Panc1 (cell line): ENCODE measurements at regions of chr7 and their contacts with region 1.

Region 1: DNA sequence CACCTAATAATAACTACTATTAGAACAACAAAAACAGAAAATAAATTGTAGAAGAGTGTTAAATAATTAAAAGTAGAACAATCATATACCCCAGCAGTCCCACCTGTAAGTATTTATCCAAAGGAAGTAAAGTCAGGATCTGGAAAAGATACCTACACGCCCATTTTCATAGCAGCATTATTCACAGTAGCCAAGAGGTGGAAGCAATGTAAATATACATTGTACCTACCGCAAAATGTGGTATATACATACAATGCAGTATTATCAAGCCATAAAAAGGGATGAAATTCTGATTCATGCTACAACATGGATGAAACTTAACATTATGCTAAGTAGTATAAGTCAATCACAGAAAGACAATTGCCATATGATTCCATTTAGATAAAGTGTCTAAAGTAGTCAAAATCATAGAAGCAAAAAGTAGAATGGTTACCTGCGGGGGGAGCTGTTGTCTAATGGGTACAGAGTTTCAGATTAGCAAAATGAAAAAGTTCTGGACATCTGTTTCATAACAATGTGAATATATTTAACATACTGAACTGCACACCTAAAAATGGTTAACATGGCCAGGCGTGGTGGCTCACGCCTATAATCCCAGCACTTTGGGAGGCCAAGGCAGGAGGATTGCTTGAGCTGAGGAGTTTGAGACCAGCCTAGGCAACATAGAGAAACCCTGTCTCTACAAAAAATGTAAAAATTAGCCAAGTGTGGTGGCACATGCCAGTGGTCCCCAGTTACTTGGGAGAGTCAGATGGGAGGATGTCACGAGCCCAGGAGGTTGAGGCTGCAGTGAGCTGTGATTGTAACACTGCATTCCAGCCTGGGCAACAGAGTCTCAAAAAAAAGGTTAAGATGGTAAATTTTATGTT is 6.0 kb upstream of the TMED4 start:
- DNase-seq: peak; percentile 75
- ATAC-seq: peak; percentile 88
- H3K4me3 ChIP-seq: no peak overlapping the region
- H3K27ac ChIP-seq: no peak overlapping the region
- H3K4me1 ChIP-seq: peaks cover 5% of the 10 kb centered on the region; the same call in 1 of the 2 replicates
- H3K27me3 ChIP-seq: no peaks in the 10 kb centered on the region
- CTCF ChIP-seq: peak; percentile 84

Region 2: DNA sequence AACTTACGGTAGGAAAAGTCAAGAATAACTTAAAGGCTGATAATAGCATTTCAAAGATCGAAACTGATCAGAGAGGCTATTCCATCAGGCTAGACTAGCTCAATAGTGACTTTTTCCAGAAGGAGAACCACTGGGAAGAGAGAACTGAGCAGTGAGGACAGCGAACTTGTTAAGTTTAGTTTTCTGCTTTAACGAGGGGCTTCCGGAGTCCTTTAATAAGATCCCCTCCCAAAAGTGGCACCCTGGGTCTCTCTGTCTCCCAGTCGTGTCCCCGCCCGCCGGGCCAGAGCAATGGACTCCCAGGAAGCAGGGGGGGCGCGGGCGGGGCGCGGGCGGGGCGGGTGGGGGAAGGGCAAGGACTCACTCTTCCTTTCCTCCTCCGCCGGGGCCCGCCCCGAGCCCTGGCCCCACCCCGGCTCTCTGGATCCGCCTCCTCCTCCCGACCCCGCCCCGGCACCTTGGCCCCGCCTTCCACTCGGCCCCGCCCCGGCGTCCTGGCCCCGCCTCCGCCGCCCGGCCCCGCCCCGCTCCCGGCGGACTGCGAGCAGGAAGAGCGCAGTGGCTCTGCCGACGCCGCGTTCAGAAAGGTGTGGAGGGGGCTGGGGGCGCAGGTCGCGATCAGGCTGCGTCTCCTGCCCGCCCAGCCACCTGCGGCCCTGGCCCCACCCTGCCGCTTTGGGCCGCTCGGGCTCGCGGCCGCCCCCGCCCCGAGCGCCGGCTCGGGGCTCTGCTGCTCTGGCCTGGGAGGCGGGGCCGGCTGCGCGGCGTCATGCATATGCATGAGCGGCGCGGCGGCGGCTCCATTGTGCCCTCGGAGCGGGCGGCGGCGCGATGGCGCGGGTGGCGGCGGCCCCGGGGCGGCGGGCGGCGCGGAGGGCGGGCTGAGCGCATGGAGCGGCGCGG is 160.2 kb after region 1 on chr7 and contains the start of gene ZMIZ2:
- CTCF ChIA-PET with region 1: no interaction called
- POLR2A ChIA-PET with region 1: no interaction called
- in situ Hi-C with region 1: no loop called
- intact Hi-C with region 1: loop called (anchors 5 kb)
- DNase-seq: no peak
- ATAC-seq: peak; percentile 92
- H3K4me3 ChIP-seq: peak within 1 kb of the TSS; percentile 64 to 80
- H3K27ac ChIP-seq: peak within 1 kb of the TSS; percentile 99
- H3K4me1 ChIP-seq: peaks cover 36% of the 10 kb centered on the region
- H3K27me3 ChIP-seq: no peaks in the 10 kb centered on the region
- CTCF ChIP-seq: no peak
- total RNA-seq, gene ZMIZ2: 137 TPM

Region 3: GRCh38 chr7:44797329-44798251 is 209.5 kb after region 1 on chr7:
- CTCF ChIA-PET with region 1: no interaction called
- POLR2A ChIA-PET with region 1: interaction called, 7 read pairs
- in situ Hi-C with region 1: no loop called
- intact Hi-C with region 1: loop called (anchors 5 kb)
- DNase-seq: peak; percentile 69
- ATAC-seq: peak; percentile 74
- H3K4me3 ChIP-seq: peak overlapping the region; percentile 82 to 97
- H3K27ac ChIP-seq: peak overlapping the region; percentile 97
- H3K4me1 ChIP-seq: peaks cover 29% of the 10 kb centered on the region
- H3K27me3 ChIP-seq: no peaks in the 10 kb centered on the region
- CTCF ChIP-seq: no peak; the same call in 1 of the 2 replicates

Region 4: DNA sequence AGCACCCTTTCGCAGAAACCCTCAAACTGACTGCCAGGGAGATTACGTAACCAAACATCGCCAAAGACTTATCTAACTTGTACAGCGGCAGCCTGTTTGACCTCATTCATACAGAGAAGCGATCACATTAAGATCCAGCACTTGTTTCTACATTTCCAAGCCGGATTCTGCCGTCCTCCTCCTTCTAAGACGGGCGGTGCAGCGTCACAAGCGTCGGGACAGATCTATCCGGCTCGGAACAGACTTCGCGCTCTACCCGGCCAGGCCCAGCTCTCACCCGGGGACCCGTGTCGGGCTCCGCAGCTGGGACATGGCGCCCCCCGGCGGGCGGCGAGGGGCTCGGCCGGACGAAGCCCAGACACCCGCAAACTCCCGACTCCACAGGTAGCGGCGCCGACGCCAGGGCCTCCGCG is 259.4 kb after region 1 on chr7:
- CTCF ChIA-PET with region 1: no interaction called
- POLR2A ChIA-PET with region 1: interaction called, 3 read pairs
- in situ Hi-C with region 1: no loop called
- intact Hi-C with region 1: loop called (anchors 5 kb)
- DNase-seq: peak; percentile 72
- ATAC-seq: peak; percentile 86
- H3K4me3 ChIP-seq: peak overlapping the region; percentile 75 to 96
- H3K27ac ChIP-seq: peak overlapping the region; percentile 96
- H3K4me1 ChIP-seq: peaks cover 23% of the 10 kb centered on the region
- H3K27me3 ChIP-seq: no peaks in the 10 kb centered on the region
- CTCF ChIP-seq: peak; percentile 99